ENCODE measurements at regions of chr10 and their contacts with region 1.

Region 1: GRCh38 chr10:7417103-7417623 is 6.3 kb upstream of the SFMBT2 start:
- DNase-seq: no peak
- H3K4me3 ChIP-seq: no peak overlapping the region
- H3K27ac ChIP-seq: no peak overlapping the region
- H3K4me1 ChIP-seq: no peaks in the 10 kb centered on the region
- H3K27me3 ChIP-seq: peaks cover 10% of the 10 kb centered on the region
- CTCF ChIP-seq: peak; percentile 28

Region 2: DNA sequence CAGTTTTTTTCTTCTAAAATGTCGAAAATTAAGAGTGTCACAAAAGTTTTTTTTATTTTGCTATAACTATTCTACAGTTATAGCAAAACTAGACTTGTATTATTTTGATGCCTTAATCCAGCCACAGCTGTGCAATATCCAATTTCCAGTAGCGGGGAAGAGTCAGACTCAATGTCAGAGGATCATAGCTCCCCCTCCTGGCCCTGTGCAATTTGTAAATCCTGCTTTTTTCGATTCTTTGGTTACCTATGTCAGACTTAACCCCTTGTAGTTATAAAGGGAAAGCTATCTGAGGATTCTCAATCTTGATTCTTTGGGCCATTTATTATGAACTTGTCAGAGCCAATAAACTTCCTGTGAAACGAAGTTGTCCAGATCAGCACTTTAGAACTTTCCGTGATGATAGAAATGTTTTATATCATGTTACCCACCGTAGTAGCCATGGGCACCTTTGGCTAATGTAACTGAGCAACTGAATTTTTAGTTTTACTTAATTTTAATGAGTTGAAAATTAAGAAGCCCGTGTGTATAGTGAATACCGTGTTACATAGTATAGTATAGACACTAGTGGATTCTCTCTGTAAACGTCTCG is 749.4 kb before region 1 on chr10:
- intact Hi-C with region 1: loop called (anchors 5 kb)
- DNase-seq: peak; percentile 22
- H3K4me3 ChIP-seq: no peak overlapping the region
- H3K27ac ChIP-seq: no peak overlapping the region
- H3K4me1 ChIP-seq: no peaks in the 10 kb centered on the region
- H3K27me3 ChIP-seq: no peaks in the 10 kb centered on the region
- CTCF ChIP-seq: peak; percentile 17

Region 3: DNA sequence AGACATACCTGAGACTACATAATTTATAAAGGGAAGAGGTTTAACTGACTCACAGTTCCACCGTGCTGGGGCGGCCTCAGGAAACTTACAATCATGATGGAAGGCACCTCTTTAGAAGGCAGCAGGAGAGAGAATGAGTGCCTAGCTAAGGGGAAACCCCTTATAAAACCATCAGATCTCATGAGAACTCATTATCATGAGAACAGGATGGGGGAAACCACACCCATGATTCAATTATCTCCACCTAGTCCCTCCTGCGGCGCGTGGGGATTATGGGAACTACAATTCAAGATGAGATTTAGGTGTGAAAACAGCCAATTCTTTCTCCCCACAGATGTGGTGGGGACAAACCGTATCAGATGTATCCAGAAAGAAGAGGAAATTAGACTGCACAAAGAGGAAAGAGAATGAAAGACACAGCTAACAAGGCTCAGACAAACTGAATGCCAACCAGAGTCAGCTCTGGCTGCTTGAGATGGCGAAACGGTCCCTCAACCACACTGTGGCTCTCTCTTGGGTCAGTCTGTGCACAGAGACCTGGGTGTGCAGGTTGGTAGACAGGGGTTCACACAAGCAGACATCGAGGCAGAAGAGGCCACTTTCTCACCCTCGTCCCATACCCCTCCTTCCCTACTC is 381.9 kb before region 1 on chr10:
- intact Hi-C with region 1: no loop called
- DNase-seq: no peak
- H3K4me3 ChIP-seq: no peak overlapping the region
- H3K27ac ChIP-seq: no peak overlapping the region
- H3K4me1 ChIP-seq: no peaks in the 10 kb centered on the region
- H3K27me3 ChIP-seq: no peaks in the 10 kb centered on the region
- CTCF ChIP-seq: no peak

Region 4: GRCh38 chr10:7258948-7259523 is 158.1 kb before region 1 on chr10:
- intact Hi-C with region 1: loop called (anchors 5 kb)
- DNase-seq: no peak
- H3K4me3 ChIP-seq: no peak overlapping the region
- H3K27ac ChIP-seq: no peak overlapping the region
- H3K4me1 ChIP-seq: no peaks in the 10 kb centered on the region
- H3K27me3 ChIP-seq: no peaks in the 10 kb centered on the region
- CTCF ChIP-seq: no peak

Region 5: GRCh38 chr10:7432884-7433726 is 15.9 kb after region 1 on chr10:
- intact Hi-C with region 1: no loop called
- DNase-seq: no peak
- H3K4me3 ChIP-seq: no peak overlapping the region
- H3K27ac ChIP-seq: no peak overlapping the region
- H3K4me1 ChIP-seq: no peaks in the 10 kb centered on the region
- H3K27me3 ChIP-seq: no peaks in the 10 kb centered on the region
- CTCF ChIP-seq: no peak

Measured in colonic mucosa (tissue), 4 donors.